Posterior vena cava (tissue), 2 donors: ENCODE measurements at regions of chr9 and their contacts with region 1.

Region 1: GRCh38 chr9:88593537-88594185 is 58.7 kb downstream of the NXNL2 start:
- DNase-seq: no peak

Region 2: GRCh38 chr9:88578121-88579054 is 15.3 kb before region 1 on chr9:
- intact Hi-C with region 1: no loop called
- DNase-seq: peak; percentile 95

Region 3: DNA sequence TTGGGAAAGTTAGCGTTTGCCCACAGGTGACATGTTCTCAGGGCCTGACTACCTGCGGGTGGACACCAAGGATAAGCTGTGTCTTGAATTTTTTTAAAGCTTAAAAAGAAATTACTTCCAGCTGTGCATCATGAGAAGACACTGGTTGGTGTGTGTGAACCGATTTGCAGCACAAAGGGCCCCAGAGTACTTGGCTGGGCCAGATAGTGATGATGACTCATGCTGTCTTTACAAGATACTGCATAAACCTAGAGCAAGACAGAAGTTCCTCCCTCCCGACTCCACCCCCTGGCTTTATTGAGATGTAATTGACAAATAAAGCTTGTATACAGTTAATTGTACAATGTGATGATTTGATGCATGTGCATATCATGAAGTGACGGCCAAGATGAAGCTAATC is 154.1 kb after region 1 on chr9:
- intact Hi-C with region 1: loop called in 1 of 2 experiments (anchors 10 kb)
- DNase-seq: no peak

Region 4: DNA sequence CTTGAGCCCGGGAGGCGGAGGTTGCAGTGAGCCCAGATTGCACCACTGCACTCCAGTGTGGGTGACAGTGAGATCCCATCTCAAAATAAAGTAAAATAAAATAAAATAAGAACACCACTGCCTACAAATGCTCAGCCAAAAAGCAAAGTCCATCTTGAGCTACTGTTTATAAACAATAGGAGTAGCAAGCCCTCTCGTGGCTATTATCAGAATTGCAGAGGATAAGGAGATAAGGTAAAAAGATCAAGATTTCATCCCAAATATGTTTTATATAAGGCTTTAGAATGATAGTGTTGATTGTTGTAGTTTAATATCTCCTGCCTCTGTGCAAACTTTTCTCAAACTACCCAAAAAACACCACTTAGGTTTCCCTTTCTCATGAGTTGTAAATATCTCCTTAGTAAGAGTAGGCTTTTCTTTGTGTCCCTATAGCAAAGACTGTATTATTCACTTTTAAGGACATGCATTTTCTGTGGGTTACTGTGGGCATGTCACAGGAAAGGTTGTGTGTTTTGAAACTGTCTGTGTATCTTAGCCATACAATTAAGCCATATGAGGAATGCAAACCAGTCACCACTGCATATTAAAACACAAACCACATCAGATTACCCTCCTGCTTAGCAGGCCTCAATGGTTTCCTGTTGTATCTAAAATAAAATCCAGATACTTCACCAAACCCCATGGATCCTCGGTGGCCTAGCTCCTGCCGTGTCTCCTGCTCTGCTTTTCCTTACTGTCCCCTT is 685.5 kb after region 1 on chr9:
- intact Hi-C with region 1: loop called in 1 of 2 experiments (anchors 5 kb)
- DNase-seq: no peak